Activated CD4-positive, alpha-beta T cell treated with anti-CD3 and anti-CD28 coated beads for 36 hours (primary cell): ENCODE measurements at regions of chr16 and their contacts with region 1.

Region 1: DNA sequence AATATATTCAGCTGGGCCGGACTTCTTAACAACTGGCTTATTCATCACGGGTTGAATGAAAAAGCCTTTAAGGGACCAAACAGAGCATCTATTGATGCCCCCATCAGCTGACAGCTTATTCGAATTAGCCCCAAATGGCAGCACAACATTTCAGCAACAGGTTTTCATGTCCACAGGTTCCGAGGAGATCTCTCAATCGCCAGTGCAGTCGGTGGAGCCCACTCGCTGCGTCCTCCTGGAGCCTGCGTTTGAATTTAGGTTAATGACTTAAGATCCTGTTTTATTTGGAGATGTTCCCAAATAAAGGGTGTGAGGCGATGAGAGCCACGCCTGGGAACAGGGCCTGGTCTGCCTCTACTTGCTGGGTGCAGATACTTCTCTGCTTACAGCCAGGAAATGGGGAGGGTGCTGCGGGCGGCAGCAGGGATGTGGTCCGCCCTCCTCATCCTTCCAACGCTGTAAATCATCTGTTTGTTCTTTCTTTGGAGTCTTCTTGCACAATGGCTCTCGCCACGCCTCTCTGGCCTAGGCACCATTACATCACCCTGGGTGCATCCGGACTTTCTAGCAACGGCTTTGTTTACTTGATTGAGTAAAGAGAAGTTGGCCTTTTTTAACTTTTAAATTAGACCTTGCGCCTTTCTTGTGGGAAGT is 22.6 kb downstream of the NDE1 start:
- DNase-seq: peak; percentile 79
- ATAC-seq: peak; percentile 91
- H3K4me3 Mint-ChIP-seq: peak overlapping the region; percentile 56
- H3K27ac Mint-ChIP-seq: peak overlapping the region; percentile 97
- H3K4me1 Mint-ChIP-seq: peaks cover 32% of the 10 kb centered on the region
- H3K27me3 Mint-ChIP-seq: no peaks in the 10 kb centered on the region

Region 2: DNA sequence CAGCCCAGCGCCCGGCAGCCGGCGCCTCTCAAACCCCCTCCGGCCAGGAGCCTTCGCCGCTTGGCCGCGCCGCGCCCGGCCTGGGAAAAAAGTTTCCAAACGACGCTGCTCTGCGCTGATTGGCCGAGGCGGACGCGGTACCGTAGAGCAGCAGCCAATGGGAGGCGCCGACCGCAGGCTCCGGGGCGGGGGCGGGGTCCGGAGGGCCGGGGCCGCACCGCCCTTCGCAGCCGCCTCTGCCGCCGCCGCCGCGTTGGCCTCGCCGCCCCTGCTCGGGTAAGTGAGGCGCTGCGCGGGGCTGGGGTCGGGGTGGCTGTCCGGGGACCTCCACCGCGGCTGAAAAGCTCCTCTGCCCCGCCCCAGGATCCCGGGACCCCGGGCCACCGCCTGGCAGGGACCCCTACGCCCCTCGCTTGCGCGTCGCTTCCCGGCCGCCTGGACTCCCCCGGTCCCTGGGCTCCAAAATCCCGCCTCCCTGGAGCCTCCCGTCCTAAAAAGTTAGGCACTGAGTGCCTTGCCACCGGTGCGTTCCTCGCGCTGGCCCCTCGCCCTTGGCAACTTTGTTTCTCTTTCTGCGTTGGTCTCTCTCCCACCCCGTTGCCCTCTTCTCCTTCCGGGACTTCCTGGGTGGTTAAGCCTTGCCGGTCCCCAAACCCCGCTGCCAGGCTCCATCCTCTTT is 22.5 kb before region 1 on chr16 and contains the start of gene NDE1:
- CTCF ChIA-PET with region 1: interaction called, 3 read pairs
- POLR2A ChIA-PET with region 1: no interaction called
- intact Hi-C with region 1: loop called in 1 of 2 experiments (anchors 1 kb)
- DNase-seq: peak; percentile 94
- ATAC-seq: peak; percentile 92
- H3K4me3 Mint-ChIP-seq: peak within 1 kb of the TSS; percentile 100
- H3K27ac Mint-ChIP-seq: peak within 1 kb of the TSS; percentile 99
- H3K4me1 Mint-ChIP-seq: peaks cover 29% of the 10 kb centered on the region
- H3K27me3 Mint-ChIP-seq: no peaks in the 10 kb centered on the region
- total RNA-seq, gene NDE1: 107 to 117 TPM

Region 3: DNA sequence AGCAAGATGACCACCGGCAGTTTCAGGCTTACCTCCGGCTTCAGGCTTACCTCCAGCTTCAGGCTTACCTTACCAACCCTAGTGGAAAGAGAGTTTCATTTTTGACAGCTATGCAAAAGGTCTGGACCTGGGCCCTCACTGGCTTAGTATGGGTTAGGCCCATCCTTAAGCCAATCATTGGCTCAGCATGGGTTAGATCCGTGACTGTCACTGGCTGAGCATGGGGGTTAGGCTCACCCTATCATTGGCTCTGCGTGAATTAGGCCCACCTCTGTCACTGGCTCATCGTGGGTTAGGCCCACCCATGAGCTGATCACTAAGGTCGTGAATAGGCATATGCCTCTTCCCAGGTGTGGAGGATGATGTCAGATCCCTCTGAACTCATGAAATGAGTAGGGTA is 14.5 kb before region 1 on chr16:
- CTCF ChIA-PET with region 1: no interaction called
- POLR2A ChIA-PET with region 1: interaction called, 6 read pairs
- intact Hi-C with region 1: loop called in 1 of 2 experiments (anchors 1 kb)
- DNase-seq: no peak
- ATAC-seq: no peak
- H3K4me3 Mint-ChIP-seq: no peak overlapping the region
- H3K27ac Mint-ChIP-seq: peak overlapping the region; percentile 42
- H3K4me1 Mint-ChIP-seq: peaks cover 51% of the 10 kb centered on the region
- H3K27me3 Mint-ChIP-seq: no peaks in the 10 kb centered on the region